ENCODE measurements at regions of chr22 and their contacts with region 1.

Region 1: DNA sequence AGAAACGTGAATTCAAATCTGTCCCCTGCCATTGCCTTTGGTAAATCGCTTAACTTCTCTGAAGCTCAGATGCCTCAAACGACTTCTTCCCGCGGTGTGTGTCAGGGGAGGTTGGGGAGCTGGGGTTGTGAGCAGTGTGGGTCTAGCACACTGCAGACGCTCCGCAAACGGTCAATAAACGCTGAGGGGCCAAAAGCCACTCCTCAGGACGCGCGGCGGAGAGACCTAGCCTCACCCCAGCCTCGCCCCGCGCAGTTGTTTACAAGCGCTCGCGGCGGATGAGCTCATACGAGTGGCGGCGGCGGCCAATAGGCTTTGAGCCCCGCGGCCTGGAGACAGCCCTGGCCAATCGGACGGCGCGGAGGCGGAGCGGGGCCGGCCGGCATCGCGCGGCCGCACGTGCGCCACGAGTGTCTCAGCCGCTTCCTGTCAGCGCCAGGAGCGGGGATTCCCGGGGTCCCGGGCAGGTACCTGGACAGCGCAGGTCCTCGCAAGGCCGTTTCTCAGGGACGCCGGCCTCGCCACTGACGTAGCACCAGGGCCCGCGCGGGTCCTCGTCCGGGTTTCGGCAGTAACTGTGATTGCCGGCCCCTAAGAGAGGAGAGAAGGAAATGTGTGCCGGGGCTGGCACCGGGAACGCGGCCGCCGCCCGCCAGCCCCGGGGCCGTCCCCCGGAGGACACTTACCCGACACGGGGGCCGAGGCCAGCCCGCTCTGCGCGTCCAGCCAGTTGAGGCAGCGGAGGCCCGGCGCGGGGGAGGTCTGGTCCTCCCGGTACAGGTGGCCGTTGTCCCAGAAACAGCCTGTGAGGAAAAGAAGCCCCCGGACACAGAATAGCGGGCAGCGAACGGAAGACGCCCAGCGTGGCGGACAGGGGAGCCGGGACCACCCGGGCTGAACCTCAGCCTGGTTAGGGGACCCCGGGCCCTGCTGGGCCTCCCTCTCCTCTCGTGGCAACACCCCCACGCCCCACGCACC is 1.5 kb downstream of the PIK3IP1 start:
- DNase-seq: peak; percentile 92 to 99 (median 95)
- ATAC-seq: peak; percentile 72
- H3K4me3 ChIP-seq: peak overlapping the region; percentile 97 to 99
- H3K4me3 Mint-ChIP-seq: peak overlapping the region; percentile 99
- H3K27ac ChIP-seq: peak overlapping the region; percentile 99
- H3K27ac Mint-ChIP-seq: peak overlapping the region; percentile 100
- H3K4me1 ChIP-seq: peaks cover 55% of the 10 kb centered on the region
- H3K4me1 Mint-ChIP-seq: peaks cover 65% of the 10 kb centered on the region
- H3K27me3 ChIP-seq: no peaks in the 10 kb centered on the region
- H3K27me3 Mint-ChIP-seq: no peaks in the 10 kb centered on the region
- CTCF ChIP-seq: no peak

Region 2: DNA sequence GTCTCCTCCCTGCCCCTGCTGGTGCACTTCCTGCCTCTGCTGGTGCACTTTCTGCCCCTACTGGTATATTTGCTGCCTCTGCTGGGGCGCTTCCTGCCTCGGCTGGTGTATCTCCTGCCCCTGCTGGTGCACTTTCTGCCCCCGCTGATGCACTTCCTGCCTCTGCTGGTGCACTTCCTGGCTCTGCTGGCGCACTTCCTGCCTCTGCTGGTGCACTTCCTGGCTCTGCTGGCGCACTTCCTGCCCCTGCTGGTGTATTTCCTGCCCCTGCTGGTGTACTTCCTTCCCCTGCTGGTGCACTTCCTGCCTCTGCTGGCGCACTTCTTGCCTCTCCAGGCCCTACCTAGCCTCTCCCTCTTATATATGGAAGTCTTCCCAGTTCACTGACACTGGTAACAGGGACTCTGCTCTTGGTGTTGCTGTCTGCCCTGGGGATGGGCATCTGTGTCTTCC is 855.1 kb before region 1 on chr22:
- CTCF ChIA-PET with region 1: no interaction called
- POLR2A ChIA-PET with region 1: no interaction called
- intact Hi-C with region 1: loop called in 1 of 2 experiments (anchors 5 kb)
- DNase-seq: peak; percentile 68 to 99 (median 89)
- ATAC-seq: peak; percentile 92
- H3K4me3 ChIP-seq: peak overlapping the region; percentile 39 to 51
- H3K4me3 Mint-ChIP-seq: peak overlapping the region; percentile 65
- H3K27ac ChIP-seq: peak overlapping the region; percentile 80 to 100
- H3K27ac Mint-ChIP-seq: peak overlapping the region; percentile 97
- H3K4me1 ChIP-seq: peaks cover 17% of the 10 kb centered on the region
- H3K4me1 Mint-ChIP-seq: peaks cover 26% of the 10 kb centered on the region
- H3K27me3 ChIP-seq: peaks cover 0 to 6% of the 10 kb centered on the region in 2 experiments
- H3K27me3 Mint-ChIP-seq: peaks cover 22% of the 10 kb centered on the region
- CTCF ChIP-seq: peak; percentile 70

Region 3: DNA sequence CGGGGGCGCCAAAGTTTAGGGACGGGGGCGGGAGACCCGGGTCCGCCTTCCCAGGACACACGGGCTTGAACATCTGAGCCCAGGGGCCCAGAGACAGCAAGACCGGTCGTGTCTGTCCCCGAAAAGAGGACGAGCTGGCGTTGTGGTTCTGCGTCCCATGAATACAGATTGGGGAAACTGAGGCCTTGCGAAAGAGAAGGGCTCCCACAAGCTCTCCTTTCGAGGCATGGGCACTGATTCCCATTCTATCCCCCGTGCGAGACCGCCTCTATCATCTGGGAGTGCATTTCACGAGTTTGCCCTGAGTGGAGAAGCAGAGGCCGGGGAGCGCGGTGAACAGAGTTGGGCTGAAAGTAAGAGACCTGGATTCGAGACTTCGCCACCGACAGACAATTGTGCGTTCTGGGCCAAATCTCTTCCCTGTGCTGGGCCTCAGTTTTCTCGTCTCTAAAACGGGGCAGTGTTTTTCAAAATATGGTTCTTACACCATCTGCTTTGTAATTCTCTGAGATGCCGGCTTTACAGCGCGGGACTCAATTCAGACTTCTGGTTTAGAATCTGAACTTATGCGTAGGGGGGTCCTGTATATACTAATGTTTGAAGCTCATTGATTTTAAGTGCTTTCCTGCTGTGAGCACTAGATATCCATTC is 130.3 kb before region 1 on chr22:
- CTCF ChIA-PET with region 1: no interaction called
- POLR2A ChIA-PET with region 1: interaction called, 7 read pairs
- intact Hi-C with region 1: loop called in 1 of 2 experiments (anchors 5 kb)
- DNase-seq: peak in 6 of 9 experiments; percentile 11 to 55 (median 28)
- ATAC-seq: peak; percentile 34
- H3K4me3 ChIP-seq: peak overlapping the region; percentile 78 to 86
- H3K4me3 Mint-ChIP-seq: peak overlapping the region; percentile 100
- H3K27ac ChIP-seq: peak overlapping the region; percentile 72 to 90
- H3K27ac Mint-ChIP-seq: peak overlapping the region; percentile 98
- H3K4me1 ChIP-seq: peaks cover 26% of the 10 kb centered on the region
- H3K4me1 Mint-ChIP-seq: peaks cover 38% of the 10 kb centered on the region
- H3K27me3 ChIP-seq: no peaks in the 10 kb centered on the region
- H3K27me3 Mint-ChIP-seq: no peaks in the 10 kb centered on the region
- CTCF ChIP-seq: no peak

Region 4: GRCh38 chr22:31272522-31273446 is 18.0 kb before region 1 on chr22:
- CTCF ChIA-PET with region 1: interaction called, 84 read pairs
- POLR2A ChIA-PET with region 1: interaction called, 608 read pairs
- intact Hi-C with region 1: no loop called
- DNase-seq: peak in 8 of 9 experiments; percentile 44 to 76 (median 64)
- ATAC-seq: peak; percentile 76
- H3K4me3 ChIP-seq: no peak overlapping the region
- H3K4me3 Mint-ChIP-seq: no peak overlapping the region
- H3K27ac ChIP-seq: no peak overlapping the region
- H3K27ac Mint-ChIP-seq: peak overlapping the region; percentile 91
- H3K4me1 ChIP-seq: peaks cover 61% of the 10 kb centered on the region
- H3K4me1 Mint-ChIP-seq: peaks cover 63% of the 10 kb centered on the region
- H3K27me3 ChIP-seq: no peaks in the 10 kb centered on the region
- H3K27me3 Mint-ChIP-seq: no peaks in the 10 kb centered on the region
- CTCF ChIP-seq: peak; percentile 63

Region 5: DNA sequence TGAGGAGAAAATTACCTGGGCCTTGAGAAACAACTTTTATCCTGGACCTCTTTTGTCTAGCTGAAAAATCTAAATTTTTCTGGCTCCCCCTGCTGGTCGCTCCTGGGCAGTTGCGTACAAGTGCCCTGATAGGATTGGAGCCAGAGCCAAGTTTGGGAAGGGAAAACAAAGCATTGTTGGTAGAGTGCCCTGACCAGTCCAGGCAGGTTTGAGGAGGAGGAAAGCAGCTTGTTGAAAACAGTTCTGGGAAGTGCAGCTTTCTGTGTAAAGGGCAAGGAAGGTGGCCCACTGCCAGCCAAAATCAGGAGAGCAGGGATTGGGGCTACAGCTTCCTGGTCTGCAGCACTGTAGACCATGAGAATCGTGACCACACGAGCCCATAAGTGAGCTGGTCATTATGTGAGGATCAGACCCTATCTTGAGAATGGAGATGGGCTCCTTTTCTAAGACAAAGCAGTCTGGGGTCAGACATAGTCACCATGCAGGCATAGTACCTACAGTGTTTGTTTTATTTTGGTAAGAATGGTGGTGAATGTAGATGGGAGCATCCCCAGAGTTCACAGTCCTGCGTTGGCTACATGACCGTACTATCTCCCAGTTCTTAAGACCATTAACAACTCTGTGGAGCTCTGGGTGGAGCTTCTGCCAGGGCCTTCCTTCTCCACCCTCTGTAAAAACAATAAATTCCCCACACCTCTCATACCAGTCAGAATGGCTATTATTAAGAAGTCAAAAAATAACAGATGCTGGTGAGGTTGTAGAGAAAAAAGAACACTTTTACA is 22.8 kb after region 1 on chr22:
- CTCF ChIA-PET with region 1: interaction called, 47 read pairs
- POLR2A ChIA-PET with region 1: interaction called, 79 read pairs
- intact Hi-C with region 1: loop called (anchors 1 to 2 kb)
- DNase-seq: peak; percentile 37 to 82 (median 68)
- ATAC-seq: peak; percentile 84
- H3K4me3 ChIP-seq: no peak overlapping the region
- H3K4me3 Mint-ChIP-seq: no peak overlapping the region
- H3K27ac ChIP-seq: no peak overlapping the region
- H3K27ac Mint-ChIP-seq: no peak overlapping the region
- H3K4me1 ChIP-seq: peaks cover 13% of the 10 kb centered on the region
- H3K4me1 Mint-ChIP-seq: peaks cover 9% of the 10 kb centered on the region
- H3K27me3 ChIP-seq: no peaks in the 10 kb centered on the region
- H3K27me3 Mint-ChIP-seq: no peaks in the 10 kb centered on the region
- CTCF ChIP-seq: peak; percentile 82

Region 6: DNA sequence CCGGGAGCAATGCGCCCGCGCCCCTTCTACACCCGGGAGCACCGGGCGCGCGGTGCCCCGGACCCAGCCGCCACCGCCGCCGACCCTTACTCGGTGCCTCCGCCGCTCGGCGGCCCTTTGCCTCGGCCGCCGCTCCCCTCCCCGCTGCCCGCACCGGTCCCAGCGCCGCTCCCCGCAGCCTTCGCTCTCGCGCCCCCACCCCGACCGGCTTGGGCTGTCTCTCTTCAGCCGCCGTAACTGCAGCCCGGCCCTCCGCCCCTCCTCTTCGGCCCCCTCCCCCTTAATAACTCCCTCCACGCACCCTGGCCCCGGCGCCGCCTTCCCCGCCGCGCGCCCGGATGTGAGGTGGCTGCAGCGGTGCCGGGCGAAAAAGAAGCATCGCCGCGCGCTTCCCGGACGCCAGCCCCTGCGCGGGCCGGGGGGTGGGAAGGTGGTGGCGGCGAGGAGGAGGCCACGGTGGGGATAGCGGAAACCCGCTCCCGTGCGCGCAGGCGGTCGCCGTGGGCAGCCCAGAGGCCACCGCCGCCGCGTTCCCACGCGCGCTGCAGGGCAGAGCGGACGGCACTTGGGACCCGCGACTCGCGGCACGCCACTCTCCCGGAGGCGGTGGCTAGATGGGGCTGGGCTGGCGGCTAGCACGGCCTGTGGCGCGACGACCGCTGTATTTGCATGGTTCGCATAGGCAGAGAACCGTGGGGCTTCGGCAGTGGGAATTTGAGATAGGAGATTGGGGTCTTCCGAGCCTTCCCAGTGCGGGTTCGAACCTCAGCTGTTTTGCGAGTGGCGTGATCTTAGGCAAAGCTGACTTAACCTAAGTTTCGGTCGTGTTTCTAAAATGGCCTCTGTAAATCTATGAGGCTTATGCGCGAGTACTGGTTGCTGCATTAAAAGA is 199.1 kb after region 1 on chr22 and contains the start of gene EIF4ENIF1:
- CTCF ChIA-PET with region 1: no interaction called
- POLR2A ChIA-PET with region 1: interaction called, 5 read pairs
- intact Hi-C with region 1: loop called in 1 of 2 experiments (anchors 5 kb)
- DNase-seq: peak; percentile 71 to 93 (median 85)
- ATAC-seq: peak; percentile 80
- H3K4me3 ChIP-seq: peak within 1 kb of the TSS; percentile 78 to 79
- H3K4me3 Mint-ChIP-seq: peak within 1 kb of the TSS; percentile 93
- H3K27ac ChIP-seq: peak within 1 kb of the TSS; percentile 92
- H3K27ac Mint-ChIP-seq: peak within 1 kb of the TSS; percentile 98
- H3K4me1 ChIP-seq: peaks cover 18% of the 10 kb centered on the region
- H3K4me1 Mint-ChIP-seq: peaks cover 47% of the 10 kb centered on the region
- H3K27me3 ChIP-seq: no peaks in the 10 kb centered on the region
- H3K27me3 Mint-ChIP-seq: no peaks in the 10 kb centered on the region
- CTCF ChIP-seq: no peak
- total RNA-seq, gene EIF4ENIF1: 12.1 to 14.5 TPM

Region 7: DNA sequence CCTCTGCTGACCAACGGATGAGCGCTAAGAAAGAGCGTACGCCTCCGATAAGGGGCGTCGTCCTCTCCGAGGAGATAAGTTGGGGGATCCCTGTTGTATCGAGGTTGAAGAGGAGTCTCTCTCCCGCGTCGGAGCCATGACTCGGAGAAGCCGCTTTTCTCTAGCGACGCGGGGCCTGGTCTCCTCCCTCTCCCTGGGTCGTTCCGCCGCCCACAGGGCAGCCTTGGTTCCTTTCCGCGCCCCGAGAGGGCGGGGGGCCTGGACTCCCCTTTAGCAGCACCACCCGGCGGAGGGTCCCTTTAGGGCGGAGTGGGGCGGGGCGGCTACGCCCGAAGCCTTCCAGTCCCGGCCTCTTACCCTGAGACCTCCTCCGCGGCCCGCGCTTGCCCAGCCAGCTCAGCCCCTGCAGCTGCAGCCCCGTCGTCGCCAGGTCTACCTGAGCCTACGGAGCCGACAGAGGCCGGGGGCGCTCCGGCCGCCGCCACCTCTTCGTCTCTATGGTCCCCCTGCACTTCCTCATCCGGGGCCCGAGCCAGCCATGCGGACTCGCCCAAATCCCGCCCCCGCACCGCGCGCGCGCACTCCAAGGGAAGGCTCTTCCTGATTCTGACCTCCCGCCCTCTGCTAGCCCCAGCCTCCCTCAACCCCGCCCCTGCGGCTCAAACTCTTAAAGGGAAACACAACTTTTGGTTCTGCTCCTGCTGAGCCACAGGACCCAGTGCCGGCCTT is 459.0 kb after region 1 on chr22 and contains the start of gene PRR14L:
- CTCF ChIA-PET with region 1: no interaction called
- POLR2A ChIA-PET with region 1: no interaction called
- intact Hi-C with region 1: loop called (anchors 5 kb)
- DNase-seq: peak; percentile 96 to 100 (median 99)
- ATAC-seq: peak; percentile 75
- H3K4me3 ChIP-seq: peak within 1 kb of the TSS; percentile 84 to 90
- H3K4me3 Mint-ChIP-seq: peak within 1 kb of the TSS; percentile 98
- H3K27ac ChIP-seq: peak within 1 kb of the TSS; percentile 79 to 84
- H3K27ac Mint-ChIP-seq: peak within 1 kb of the TSS; percentile 97
- H3K4me1 ChIP-seq: peaks cover 40% of the 10 kb centered on the region
- H3K4me1 Mint-ChIP-seq: peaks cover 53% of the 10 kb centered on the region
- H3K27me3 ChIP-seq: no peaks in the 10 kb centered on the region
- H3K27me3 Mint-ChIP-seq: no peaks in the 10 kb centered on the region
- CTCF ChIP-seq: no peak
- total RNA-seq, gene PRR14L: 17.8 to 21.2 TPM

Measured in CD8-positive, alpha-beta T cell (primary cell).